ENCODE measurements at regions of chr16 and their contacts with region 1.

Region 1: GRCh38 chr16:48164907-48165726 is 9.3 kb upstream of the ABCC12 start:
- DNase-seq: peak; percentile 59
- ATAC-seq: peak; percentile 97
- H3K4me3 ChIP-seq: no peak overlapping the region
- H3K27ac ChIP-seq: no peak overlapping the region
- H3K4me1 ChIP-seq: peaks cover 0 to 7% of the 10 kb centered on the region in 2 experiments; a peak in 2 of 4 replicates
- H3K27me3 ChIP-seq: no peaks in the 10 kb centered on the region
- CTCF ChIP-seq: peak; percentile 76 to 90 (median 86)
- POLR2A ChIP-seq: no peak
- RAD21 ChIP-seq: peak; percentile 96

Region 2: DNA sequence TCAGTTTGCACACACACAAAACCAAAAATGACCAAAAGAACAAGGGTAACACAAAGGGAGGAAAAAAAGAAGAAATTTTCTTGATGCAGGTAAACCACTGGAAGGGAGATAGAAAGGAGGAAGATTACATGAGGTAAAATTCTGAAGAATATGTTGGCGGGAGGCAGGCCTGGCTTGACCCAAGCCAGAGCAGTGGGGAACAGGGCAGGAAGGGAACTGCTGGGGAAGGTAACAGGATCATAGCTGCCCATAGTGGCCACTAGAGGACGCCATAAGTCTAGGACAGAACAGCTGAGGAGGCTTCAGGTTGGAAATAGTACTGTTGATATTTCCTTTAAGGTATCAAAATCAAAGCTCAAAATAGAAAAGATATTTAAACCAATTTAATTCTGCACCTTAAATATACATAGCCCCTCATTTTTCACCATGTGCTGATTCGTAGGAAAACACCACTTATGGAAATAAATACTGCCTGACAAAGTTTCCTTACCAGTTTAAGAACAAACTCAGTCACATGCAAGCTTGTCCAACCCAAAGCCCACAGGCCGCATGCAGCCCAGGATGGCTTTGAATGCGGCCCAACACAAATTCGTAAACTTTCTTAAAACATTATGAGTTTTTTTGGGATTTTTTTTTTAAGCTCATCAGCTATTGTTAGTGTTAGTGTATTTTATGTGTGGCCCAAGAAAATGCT is 1491.7 kb before region 1 on chr16:
- CTCF ChIA-PET with region 1: interaction called, 3 read pairs
- POLR2A ChIA-PET with region 1: no interaction called
- RAD21 ChIA-PET with region 1: no interaction called
- intact Hi-C with region 1: loop called (anchors 5 kb)
- DNase-seq: peak; percentile 51
- ATAC-seq: peak; percentile 100
- H3K4me3 ChIP-seq: no peak overlapping the region
- H3K27ac ChIP-seq: no peak overlapping the region
- H3K4me1 ChIP-seq: no peaks in the 10 kb centered on the region
- H3K27me3 ChIP-seq: no peaks in the 10 kb centered on the region
- CTCF ChIP-seq: peak; percentile 46 to 99 (median 98); a peak in 5 of 6 replicates
- POLR2A ChIP-seq: no peak
- RAD21 ChIP-seq: peak; percentile 76

Region 3: GRCh38 chr16:46947900-46948547 is 1217.1 kb before region 1 on chr16:
- CTCF ChIA-PET with region 1: interaction called, 24 read pairs
- POLR2A ChIA-PET with region 1: interaction called, 3 read pairs
- RAD21 ChIA-PET with region 1: interaction called in 1 of 2 experiments, 5 read pairs
- intact Hi-C with region 1: loop called (anchors 1 kb)
- DNase-seq: peak; percentile 29
- ATAC-seq: peak; percentile 90
- H3K4me3 ChIP-seq: no peak overlapping the region
- H3K27ac ChIP-seq: no peak overlapping the region
- H3K4me1 ChIP-seq: no peaks in the 10 kb centered on the region
- H3K27me3 ChIP-seq: no peaks in the 10 kb centered on the region
- CTCF ChIP-seq: peak; percentile 63 to 75 (median 65)
- POLR2A ChIP-seq: no peak
- RAD21 ChIP-seq: peak; percentile 89

Region 4: DNA sequence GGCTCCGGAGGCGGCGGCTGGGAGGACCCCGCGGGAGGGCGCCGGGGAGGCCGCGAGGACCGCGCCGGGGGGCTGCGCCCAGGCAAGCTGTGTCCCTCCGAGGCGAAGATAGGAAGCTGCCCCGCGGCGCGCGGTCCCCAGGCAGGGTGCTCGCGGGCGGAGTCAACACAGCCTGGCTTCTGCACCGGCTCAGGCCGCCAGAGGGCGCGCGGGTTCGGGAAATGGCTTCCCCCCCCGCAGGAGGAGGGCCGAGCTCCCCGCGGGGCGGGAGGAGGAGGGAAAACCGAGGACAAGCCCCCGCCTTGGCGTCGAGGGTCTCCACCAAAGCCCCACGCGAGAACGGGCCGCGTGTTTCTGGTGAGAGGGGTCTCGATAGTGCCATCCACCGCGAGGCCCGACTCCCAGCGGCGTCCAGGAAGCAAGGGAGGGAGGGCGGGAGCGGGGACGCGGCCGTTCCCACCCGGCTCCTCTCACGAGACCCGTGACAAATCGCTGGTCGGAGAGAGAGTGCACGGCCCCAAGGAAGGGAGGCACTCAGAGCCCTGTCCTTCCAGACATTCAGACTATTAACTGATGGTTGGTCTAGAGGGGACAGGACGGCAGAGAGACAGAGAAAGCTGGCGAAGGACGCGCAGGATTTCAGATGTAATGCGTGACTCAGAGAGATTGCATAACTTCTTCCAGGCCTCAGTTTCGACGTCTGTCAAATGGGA is 1127.2 kb before region 1 on chr16:
- CTCF ChIA-PET with region 1: interaction called, 34 read pairs
- POLR2A ChIA-PET with region 1: interaction called, 3 read pairs
- RAD21 ChIA-PET with region 1: interaction called, 5 to 8 read pairs
- intact Hi-C with region 1: loop called (anchors 2 kb)
- DNase-seq: peak; percentile 49
- ATAC-seq: peak; percentile 95
- H3K4me3 ChIP-seq: peak overlapping the region; percentile 46 to 67
- H3K27ac ChIP-seq: peak overlapping the region; percentile 43; the same call in 1 of the 2 replicates
- H3K4me1 ChIP-seq: peaks cover 5 to 10% of the 10 kb centered on the region in 2 experiments; a peak in 2 of 4 replicates
- H3K27me3 ChIP-seq: no peaks in the 10 kb centered on the region
- CTCF ChIP-seq: peak; percentile 55 to 86 (median 78); a peak in 5 of 6 replicates
- POLR2A ChIP-seq: no peak
- RAD21 ChIP-seq: peak; percentile 81

Region 5: GRCh38 chr16:47141773-47142485 is 1023.2 kb before region 1 on chr16:
- CTCF ChIA-PET with region 1: interaction called, 23 read pairs
- POLR2A ChIA-PET with region 1: interaction called, 3 read pairs
- RAD21 ChIA-PET with region 1: interaction called, 3 to 7 read pairs
- intact Hi-C with region 1: no loop called
- DNase-seq: peak; percentile 85
- ATAC-seq: peak; percentile 82
- H3K4me3 ChIP-seq: peak overlapping the region; percentile 43 to 52
- H3K27ac ChIP-seq: no peak overlapping the region
- H3K4me1 ChIP-seq: peaks cover 8 to 44% of the 10 kb centered on the region in 2 experiments; a peak in 3 of 4 replicates
- H3K27me3 ChIP-seq: no peaks in the 10 kb centered on the region
- CTCF ChIP-seq: peak; percentile 93 to 97 (median 94)
- POLR2A ChIP-seq: no peak
- RAD21 ChIP-seq: peak; percentile 85

Region 6: DNA sequence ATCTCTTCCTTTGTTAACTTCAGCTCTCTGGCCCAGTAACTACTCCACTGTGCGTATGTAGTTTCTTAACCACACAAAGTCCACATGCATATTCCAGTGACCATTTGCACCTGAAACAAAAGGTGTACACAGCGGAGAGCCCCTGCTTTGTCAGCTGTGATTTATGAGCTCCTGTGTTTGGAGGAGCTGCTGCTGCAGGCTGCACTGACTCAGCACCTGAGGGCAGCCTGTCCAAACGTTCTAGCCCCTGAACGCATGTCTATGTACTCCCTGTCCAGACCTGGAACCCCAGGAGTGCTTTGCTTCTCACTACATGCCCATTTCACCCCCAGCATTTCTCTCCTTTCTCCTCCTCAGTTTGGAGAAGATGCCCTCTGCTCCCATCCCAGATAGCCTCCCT is 225.4 kb before region 1 on chr16:
- CTCF ChIA-PET with region 1: no interaction called
- POLR2A ChIA-PET with region 1: no interaction called
- RAD21 ChIA-PET with region 1: no interaction called
- intact Hi-C with region 1: no loop called
- DNase-seq: no peak
- ATAC-seq: no peak
- H3K4me3 ChIP-seq: no peak overlapping the region
- H3K27ac ChIP-seq: no peak overlapping the region
- H3K4me1 ChIP-seq: no peaks in the 10 kb centered on the region
- H3K27me3 ChIP-seq: peaks cover 24% of the 10 kb centered on the region
- CTCF ChIP-seq: no peak
- POLR2A ChIP-seq: no peak
- RAD21 ChIP-seq: no peak

Region 7: DNA sequence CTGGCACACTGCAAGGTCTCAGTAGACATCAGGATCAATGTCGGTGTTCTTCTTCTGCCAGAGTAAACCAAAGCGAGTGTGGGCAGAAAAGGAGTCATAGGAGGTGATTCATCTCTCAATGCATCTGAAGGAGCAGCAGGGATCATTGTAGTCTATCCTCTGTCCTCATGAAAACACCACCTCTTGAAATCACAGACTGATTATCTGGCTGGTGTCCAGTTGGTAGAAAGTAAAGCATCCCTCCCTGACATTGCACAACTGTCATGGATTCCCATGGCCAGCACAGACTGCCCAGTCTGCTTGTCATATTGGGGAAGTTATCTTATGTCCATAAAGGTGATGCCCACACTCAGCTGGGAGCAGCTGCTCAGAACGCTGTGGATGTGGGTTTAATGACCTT is 83.5 kb before region 1 on chr16:
- CTCF ChIA-PET with region 1: no interaction called
- POLR2A ChIA-PET with region 1: no interaction called
- RAD21 ChIA-PET with region 1: no interaction called
- intact Hi-C with region 1: no loop called
- DNase-seq: no peak
- ATAC-seq: peak; percentile 34; the same call in 1 of the 2 replicates
- H3K4me3 ChIP-seq: no peak overlapping the region
- H3K27ac ChIP-seq: no peak overlapping the region
- H3K4me1 ChIP-seq: peaks cover 0 to 10% of the 10 kb centered on the region in 2 experiments; a peak in 2 of 4 replicates
- H3K27me3 ChIP-seq: peaks cover 19% of the 10 kb centered on the region; the same call in 1 of the 2 replicates
- CTCF ChIP-seq: no peak
- POLR2A ChIP-seq: no peak
- RAD21 ChIP-seq: no peak

Region 8: GRCh38 chr16:48623304-48624016 is 458.3 kb after region 1 on chr16:
- CTCF ChIA-PET with region 1: interaction called, 15 read pairs
- POLR2A ChIA-PET with region 1: no interaction called
- RAD21 ChIA-PET with region 1: no interaction called
- intact Hi-C with region 1: loop called (anchors 1 kb)
- DNase-seq: peak; percentile 46
- ATAC-seq: peak; percentile 98
- H3K4me3 ChIP-seq: peak overlapping the region; percentile 43 to 56
- H3K27ac ChIP-seq: peak overlapping the region; percentile 36; the same call in 1 of the 2 replicates
- H3K4me1 ChIP-seq: peaks cover 3 to 10% of the 10 kb centered on the region in 2 experiments; a peak in 2 of 4 replicates
- H3K27me3 ChIP-seq: no peaks in the 10 kb centered on the region
- CTCF ChIP-seq: peak; percentile 77 to 98 (median 95)
- POLR2A ChIP-seq: no peak
- RAD21 ChIP-seq: peak; percentile 90